ENCODE measurements at regions of chr20 and their contacts with region 1.

Region 1: DNA sequence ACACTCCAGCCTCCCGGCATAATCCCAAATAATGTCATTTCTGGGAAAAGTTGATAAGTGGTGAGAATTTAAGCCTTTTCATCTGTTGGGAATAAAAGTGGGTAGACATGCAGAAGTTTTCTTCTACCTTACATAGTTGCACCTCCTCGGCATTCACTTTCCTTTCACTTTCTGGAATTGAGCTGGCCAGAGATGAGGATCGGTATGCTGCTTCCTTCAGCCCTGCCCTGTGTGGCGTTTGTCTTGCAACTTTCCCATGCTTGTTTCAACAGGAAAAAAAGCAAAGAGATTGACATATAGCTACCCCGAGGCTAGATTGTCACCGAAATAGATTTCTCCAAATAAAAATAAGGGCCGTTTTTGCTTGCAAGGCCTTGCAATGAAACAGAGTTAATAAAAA is 65.8 kb upstream of the JAG1 start:
- DNase-seq: peak; percentile 47
- H3K4me3 ChIP-seq: peak overlapping the region in 2 of 3 experiments; percentile 37 to 60
- H3K27ac ChIP-seq: no peak overlapping the region
- H3K4me1 ChIP-seq: peaks cover 5% of the 10 kb centered on the region
- H3K27me3 ChIP-seq: no peaks in the 10 kb centered on the region
- CTCF ChIP-seq: no peak
- POLR2A ChIP-seq: no peak

Region 2: GRCh38 chr20:10752206-10752605 is 12.6 kb after region 1 on chr20:
- CTCF ChIA-PET with region 1: interaction called, 4 read pairs
- POLR2A ChIA-PET with region 1: no interaction called
- dilution Hi-C with region 1: no loop called
- intact Hi-C with region 1: loop called (anchors 2 kb)
- DNase-seq: no peak
- H3K4me3 ChIP-seq: no peak overlapping the region
- H3K27ac ChIP-seq: no peak overlapping the region
- H3K4me1 ChIP-seq: peaks cover 4% of the 10 kb centered on the region
- H3K27me3 ChIP-seq: no peaks in the 10 kb centered on the region
- CTCF ChIP-seq: no peak
- POLR2A ChIP-seq: no peak

Region 3: DNA sequence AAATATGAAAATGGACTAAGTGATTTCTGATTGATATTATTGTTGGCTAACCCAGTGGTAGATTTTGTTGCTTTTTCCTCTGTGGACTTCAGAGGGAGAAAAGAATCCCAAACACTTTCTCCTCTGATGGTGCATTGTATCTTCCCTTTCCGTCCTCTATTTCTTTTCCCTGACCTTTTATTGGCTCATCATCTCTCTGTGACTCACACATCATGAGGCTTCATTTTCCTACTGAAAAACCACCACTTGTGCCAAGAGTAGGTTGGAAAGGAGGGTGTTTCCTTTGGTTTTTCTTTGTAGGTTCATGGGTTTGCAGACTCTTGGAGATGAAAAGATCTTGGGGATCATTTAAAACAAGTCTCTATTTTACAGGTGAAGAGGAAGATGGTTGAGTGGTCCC is 246.0 kb after region 1 on chr20:
- CTCF ChIA-PET with region 1: no interaction called
- POLR2A ChIA-PET with region 1: no interaction called
- dilution Hi-C with region 1: no loop called
- intact Hi-C with region 1: no loop called
- DNase-seq: peak; percentile 18
- H3K4me3 ChIP-seq: no peak overlapping the region
- H3K27ac ChIP-seq: no peak overlapping the region
- H3K4me1 ChIP-seq: no peaks in the 10 kb centered on the region
- H3K27me3 ChIP-seq: no peaks in the 10 kb centered on the region
- CTCF ChIP-seq: no peak
- POLR2A ChIP-seq: no peak

Measured in endothelial cell of umbilical vein (primary cell).